HCT116 (cell line): ENCODE measurements at regions of chr18 and their contacts with region 1.

Region 1: DNA sequence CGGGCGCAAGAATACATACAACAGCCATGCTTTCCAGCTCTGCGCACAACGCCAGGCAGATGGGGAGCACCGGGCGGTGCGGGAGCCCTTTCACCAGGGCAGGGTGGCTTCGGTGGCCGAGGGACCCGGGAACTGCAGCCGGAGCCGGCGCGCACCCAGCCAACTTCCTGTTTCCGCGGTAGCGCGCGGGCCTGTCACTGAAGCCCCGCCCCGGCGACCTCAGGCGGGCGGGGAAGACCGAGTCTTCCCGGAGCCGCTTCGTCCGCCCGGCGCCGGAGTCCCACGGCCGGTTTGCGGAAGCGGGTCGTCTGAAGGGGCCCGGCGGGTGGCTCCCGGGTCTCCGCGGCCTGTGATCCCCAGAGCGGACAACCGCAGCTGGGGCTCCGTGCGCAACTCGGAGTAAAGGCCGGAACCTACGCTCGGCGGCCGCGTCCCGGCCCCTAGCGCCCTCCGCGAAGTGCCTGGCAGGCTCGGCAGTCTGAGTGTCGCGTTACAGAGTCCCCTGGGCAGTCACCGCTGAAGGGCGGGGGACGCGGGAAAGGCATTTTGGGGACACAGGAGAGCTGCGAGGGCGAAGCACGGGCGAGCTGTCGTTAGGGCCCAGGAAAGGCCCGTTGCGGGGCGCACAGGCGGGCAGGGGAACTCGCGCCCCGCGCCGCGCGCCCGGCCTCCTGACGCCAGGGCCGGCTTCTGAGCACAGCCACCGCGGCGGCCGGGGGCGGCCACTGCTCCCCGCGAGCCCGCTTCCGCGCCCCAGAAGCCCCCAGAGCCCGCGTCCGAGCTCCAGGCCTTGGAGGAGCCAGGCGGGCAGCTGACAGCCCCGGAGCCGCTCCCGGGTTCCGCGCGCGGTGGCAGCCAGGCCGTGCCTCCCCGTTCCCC is at the start of gene MPPE1:
- DNase-seq: peak; percentile 48
- ATAC-seq: peak; percentile 90
- H3K4me3 ChIP-seq: peak within 1 kb of the TSS; percentile 77 to 85
- H3K27ac ChIP-seq: peak within 1 kb of the TSS; percentile 91
- H3K4me1 ChIP-seq: peaks cover 4 to 19% of the 10 kb centered on the region in 2 experiments; a peak in 3 of 4 replicates
- H3K27me3 ChIP-seq: no peaks in the 10 kb centered on the region
- CTCF ChIP-seq: no peak
- POLR2A ChIP-seq: peak; percentile 84
- RAD21 ChIP-seq: no peak
- total RNA-seq, gene MPPE1: 21.4 TPM

Region 2: DNA sequence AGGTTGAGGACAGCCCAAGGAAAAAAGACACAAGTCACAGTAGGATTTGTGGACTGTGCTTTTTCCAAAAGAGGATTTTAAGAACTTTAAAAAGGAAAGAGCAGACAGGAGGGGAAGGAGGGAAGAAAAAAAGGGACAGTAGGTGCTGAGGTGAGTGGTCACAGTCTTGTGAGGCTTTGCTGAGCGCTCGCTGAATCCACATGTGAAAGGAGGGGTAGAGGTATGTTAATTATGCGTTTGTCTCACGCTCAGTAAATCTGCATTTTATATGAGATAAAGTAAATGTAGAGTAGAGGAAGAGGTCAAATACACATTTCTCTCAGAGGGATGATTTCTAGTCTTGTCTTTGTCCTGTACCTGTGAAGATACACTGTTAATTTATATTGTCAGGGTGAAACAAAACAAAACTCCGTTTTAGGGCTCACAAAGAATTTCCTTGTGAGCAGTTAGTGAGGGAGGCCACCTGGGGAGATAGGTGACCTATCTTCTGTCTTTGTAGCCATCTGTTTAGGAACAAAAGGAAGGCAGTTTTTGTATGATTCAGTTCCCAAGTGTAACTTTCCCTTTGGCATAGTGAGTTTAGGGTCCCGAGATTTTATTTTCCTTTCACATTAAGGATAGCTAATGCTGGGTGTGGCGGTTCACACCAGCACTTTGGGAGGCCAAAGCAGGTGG is 194.0 kb before region 1 on chr18:
- CTCF ChIA-PET with region 1: no interaction called
- POLR2A ChIA-PET with region 1: no interaction called
- RAD21 ChIA-PET with region 1: no interaction called
- intact Hi-C with region 1: no loop called
- DNase-seq: no peak
- ATAC-seq: no peak
- H3K4me3 ChIP-seq: no peak overlapping the region
- H3K27ac ChIP-seq: no peak overlapping the region
- H3K4me1 ChIP-seq: no peaks in the 10 kb centered on the region
- H3K27me3 ChIP-seq: no peaks in the 10 kb centered on the region
- CTCF ChIP-seq: no peak
- POLR2A ChIP-seq: no peak
- RAD21 ChIP-seq: no peak

Region 3: GRCh38 chr18:11851146-11851805 is 57.1 kb before region 1 on chr18 and contains the start of gene CHMP1B:
- CTCF ChIA-PET with region 1: no interaction called
- POLR2A ChIA-PET with region 1: interaction called, 6 read pairs
- RAD21 ChIA-PET with region 1: no interaction called
- intact Hi-C with region 1: loop called (anchors 2 kb)
- DNase-seq: peak; percentile 92
- ATAC-seq: peak; percentile 92
- H3K4me3 ChIP-seq: peak within 1 kb of the TSS; percentile 82 to 99
- H3K27ac ChIP-seq: peak within 1 kb of the TSS; percentile 55
- H3K4me1 ChIP-seq: peaks cover 22 to 45% of the 10 kb centered on the region in 2 experiments
- H3K27me3 ChIP-seq: no peaks in the 10 kb centered on the region
- CTCF ChIP-seq: no peak
- POLR2A ChIP-seq: peak; percentile 75
- RAD21 ChIP-seq: no peak
- total RNA-seq, gene CHMP1B: 30.3 TPM